Activated CD4-positive, alpha-beta T cell treated with anti-CD3 and anti-CD28 coated beads, Interleukin-2, amount 10 ng/mL, durations not matched to agents 24 days and 14 days (primary cell): ENCODE measurements at regions of chr5 and their contacts with region 1.

Region 1: GRCh38 chr5:86968301-86968753 is 299.4 kb upstream of the RASA1 start:
- DNase-seq: no peak
- H3K4me3 Mint-ChIP-seq: no peak overlapping the region
- H3K27ac Mint-ChIP-seq: no peak overlapping the region
- H3K4me1 Mint-ChIP-seq: peaks cover 4% of the 10 kb centered on the region
- H3K27me3 Mint-ChIP-seq: peaks cover 28% of the 10 kb centered on the region

Region 2: GRCh38 chr5:86979811-86980411 is 11.6 kb after region 1 on chr5:
- intact Hi-C with region 1: no loop called
- DNase-seq: no peak
- H3K4me3 Mint-ChIP-seq: no peak overlapping the region
- H3K27ac Mint-ChIP-seq: no peak overlapping the region
- H3K4me1 Mint-ChIP-seq: peaks cover 2% of the 10 kb centered on the region
- H3K27me3 Mint-ChIP-seq: peaks cover 34% of the 10 kb centered on the region

Region 3: GRCh38 chr5:87400305-87400899 is 432.1 kb after region 1 on chr5:
- intact Hi-C with region 1: loop called (anchors 5 kb)
- DNase-seq: no peak
- H3K4me3 Mint-ChIP-seq: no peak overlapping the region
- H3K27ac Mint-ChIP-seq: no peak overlapping the region
- H3K4me1 Mint-ChIP-seq: peaks cover 13% of the 10 kb centered on the region
- H3K27me3 Mint-ChIP-seq: no peaks in the 10 kb centered on the region